ENCODE measurements at regions of chr4 and their contacts with region 1.

Region 1: GRCh38 chr4:110631584-110632505 is 9.0 kb upstream of the PITX2 start:
- DNase-seq: peak; percentile 76
- H3K4me3 Mint-ChIP-seq: peak overlapping the region; percentile 77
- H3K27ac Mint-ChIP-seq: peak overlapping the region; percentile 15
- H3K4me1 Mint-ChIP-seq: no peaks in the 10 kb centered on the region
- H3K27me3 Mint-ChIP-seq: no peaks in the 10 kb centered on the region
- CTCF ChIP-seq: peak; percentile 77

Region 2: GRCh38 chr4:110735686-110736085 is 103.8 kb after region 1 on chr4:
- CTCF ChIA-PET with region 1: no interaction called
- intact Hi-C with region 1: no loop called
- DNase-seq: peak; percentile 5
- H3K4me3 Mint-ChIP-seq: no peak overlapping the region
- H3K27ac Mint-ChIP-seq: no peak overlapping the region
- H3K4me1 Mint-ChIP-seq: peaks cover 11% of the 10 kb centered on the region
- H3K27me3 Mint-ChIP-seq: no peaks in the 10 kb centered on the region
- CTCF ChIP-seq: no peak

Region 3: DNA sequence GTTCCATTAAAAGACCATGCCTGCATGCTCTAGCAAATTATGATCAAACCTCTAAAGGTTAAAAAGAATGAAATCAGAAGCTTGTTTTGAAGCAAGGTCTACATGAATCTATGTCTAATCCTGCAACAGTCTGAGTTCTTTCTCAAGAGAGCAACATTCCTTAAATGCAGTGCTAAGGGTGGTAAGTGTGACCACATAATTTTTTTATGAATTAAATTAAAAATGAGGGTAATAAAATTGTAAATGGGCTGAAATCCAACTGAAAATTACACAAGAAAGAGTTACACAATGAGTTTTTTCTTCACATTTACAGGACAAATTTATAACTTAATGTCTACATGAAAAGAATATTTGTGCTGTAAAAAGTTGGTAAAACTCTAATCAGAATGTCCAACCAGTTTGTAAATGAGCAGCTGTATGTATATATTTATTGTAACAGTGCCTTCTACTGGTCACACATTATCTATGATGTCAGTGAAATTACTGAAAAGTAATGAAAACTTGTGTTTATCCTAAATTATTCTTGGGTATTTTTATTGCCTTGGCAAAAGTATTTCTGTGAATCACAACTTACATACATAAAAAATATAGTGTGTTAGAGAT is 327.3 kb after region 1 on chr4:
- CTCF ChIA-PET with region 1: no interaction called
- intact Hi-C with region 1: loop called (anchors 1 kb)
- DNase-seq: no peak
- H3K4me3 Mint-ChIP-seq: no peak overlapping the region
- H3K27ac Mint-ChIP-seq: no peak overlapping the region
- H3K4me1 Mint-ChIP-seq: no peaks in the 10 kb centered on the region
- H3K27me3 Mint-ChIP-seq: no peaks in the 10 kb centered on the region
- CTCF ChIP-seq: no peak

Region 4: GRCh38 chr4:110970642-110971041 is 338.8 kb after region 1 on chr4:
- CTCF ChIA-PET with region 1: no interaction called
- intact Hi-C with region 1: loop called (anchors 5 kb)
- DNase-seq: peak; percentile 72
- H3K4me3 Mint-ChIP-seq: no peak overlapping the region
- H3K27ac Mint-ChIP-seq: no peak overlapping the region
- H3K4me1 Mint-ChIP-seq: no peaks in the 10 kb centered on the region
- H3K27me3 Mint-ChIP-seq: no peaks in the 10 kb centered on the region
- CTCF ChIP-seq: peak; percentile 44

Region 5: GRCh38 chr4:111283061-111283677 is 651.3 kb after region 1 on chr4:
- CTCF ChIA-PET with region 1: no interaction called
- intact Hi-C with region 1: loop called (anchors 5 kb)
- DNase-seq: peak; percentile 72
- H3K4me3 Mint-ChIP-seq: no peak overlapping the region
- H3K27ac Mint-ChIP-seq: no peak overlapping the region
- H3K4me1 Mint-ChIP-seq: no peaks in the 10 kb centered on the region
- H3K27me3 Mint-ChIP-seq: no peaks in the 10 kb centered on the region
- CTCF ChIP-seq: peak; percentile 43

Region 6: DNA sequence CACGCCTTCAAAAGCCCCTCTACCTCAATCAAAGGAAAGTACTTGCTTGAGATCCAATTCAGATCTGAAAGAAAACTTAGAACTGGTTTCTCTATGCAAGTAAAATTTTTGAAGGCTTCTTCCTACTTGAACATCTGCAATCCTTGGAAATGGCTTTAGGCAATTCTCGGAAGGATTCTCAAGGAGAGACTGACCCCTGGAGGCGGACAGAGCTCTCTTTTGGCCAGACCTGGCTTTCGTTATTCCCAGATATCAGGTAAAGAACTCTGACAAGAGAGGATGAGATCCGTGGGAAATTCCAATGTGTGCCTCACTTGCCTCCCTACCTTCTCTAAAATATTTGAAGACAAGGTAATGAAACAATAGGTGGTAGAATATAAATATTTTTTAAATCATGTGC is 843.2 kb after region 1 on chr4:
- CTCF ChIA-PET with region 1: no interaction called
- intact Hi-C with region 1: loop called (anchors 10 kb)
- DNase-seq: peak; percentile 43
- H3K4me3 Mint-ChIP-seq: no peak overlapping the region
- H3K27ac Mint-ChIP-seq: no peak overlapping the region
- H3K4me1 Mint-ChIP-seq: no peaks in the 10 kb centered on the region
- H3K27me3 Mint-ChIP-seq: no peaks in the 10 kb centered on the region
- CTCF ChIP-seq: no peak

Region 7: GRCh38 chr4:111631215-111631999 is 999.6 kb after region 1 on chr4:
- CTCF ChIA-PET with region 1: no interaction called
- intact Hi-C with region 1: loop called (anchors 2 kb)
- DNase-seq: no peak
- H3K4me3 Mint-ChIP-seq: no peak overlapping the region
- H3K27ac Mint-ChIP-seq: no peak overlapping the region
- H3K4me1 Mint-ChIP-seq: no peaks in the 10 kb centered on the region
- H3K27me3 Mint-ChIP-seq: no peaks in the 10 kb centered on the region
- CTCF ChIP-seq: no peak